Activated T-helper 2 cell treated with anti-CD3 and anti-CD28 coated beads, Interferon-gamma antibody, Interleukin-2, Interleukin-4, amounts not matched to agents 10 μg/mL and 5 μg/mL and 100 μg/mL, durations not matched to agents 14 hours and 24 hours and 36 hours (primary cell): ENCODE measurements at regions of chr3 and their contacts with region 1.

Region 1: GRCh38 chr3:151879679-151880282 is 6.3 kb downstream of the SUCNR1 start:
- DNase-seq: no peak
- H3K4me3 Mint-ChIP-seq: no peak overlapping the region
- H3K27ac Mint-ChIP-seq: peak overlapping the region; percentile 0
- H3K4me1 Mint-ChIP-seq: peaks cover 12% of the 10 kb centered on the region
- H3K27me3 Mint-ChIP-seq: peaks cover 13% of the 10 kb centered on the region

Region 2: DNA sequence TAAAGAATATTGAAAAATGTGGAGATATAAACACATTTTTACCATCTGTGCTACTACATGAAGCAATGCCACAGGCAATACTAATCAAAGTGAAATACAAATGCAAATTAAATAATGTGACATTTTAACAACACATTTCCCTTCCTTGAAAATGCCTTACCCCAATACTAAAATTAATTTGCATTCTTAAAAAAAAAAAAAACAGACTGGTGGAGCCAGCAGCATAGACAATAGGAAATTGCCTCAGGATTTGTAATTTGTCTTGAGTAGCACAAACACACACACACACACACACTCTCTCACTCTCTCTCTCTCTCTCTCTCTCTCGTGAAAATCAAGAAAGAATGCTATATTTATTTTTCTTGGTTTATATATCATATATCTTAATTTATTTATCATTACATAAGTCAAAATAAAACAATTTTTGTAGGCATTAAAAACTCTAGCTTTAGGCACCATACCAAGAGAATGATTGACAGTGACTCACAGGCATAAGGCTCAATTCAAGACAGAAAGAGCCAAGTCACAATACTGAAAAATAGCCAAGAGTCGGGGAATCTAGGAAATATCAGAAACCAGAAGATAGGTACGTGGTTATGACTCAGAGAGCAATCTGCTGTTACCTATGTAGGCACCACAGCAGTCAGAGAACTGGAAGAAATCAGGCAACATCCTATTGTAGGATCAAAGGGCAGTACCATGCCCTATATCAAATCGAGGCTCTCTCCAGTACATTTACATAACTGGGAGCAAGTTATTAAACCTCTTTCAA is 16.6 kb after region 1 on chr3:
- intact Hi-C with region 1: loop called (anchors 2 kb)
- DNase-seq: no peak
- H3K4me3 Mint-ChIP-seq: no peak overlapping the region
- H3K27ac Mint-ChIP-seq: no peak overlapping the region
- H3K4me1 Mint-ChIP-seq: peaks cover 35% of the 10 kb centered on the region
- H3K27me3 Mint-ChIP-seq: peaks cover 4% of the 10 kb centered on the region